Astrocyte of the cerebellum (primary cell): ENCODE measurements at regions of chr15 and their contacts with region 1.

Region 1: GRCh38 chr15:27292641-27293040 is 321.7 kb downstream of the GABRG3 start:
- DNase-seq: no peak
- H3K4me3 ChIP-seq: no peak overlapping the region
- CTCF ChIP-seq: no peak

Region 2: DNA sequence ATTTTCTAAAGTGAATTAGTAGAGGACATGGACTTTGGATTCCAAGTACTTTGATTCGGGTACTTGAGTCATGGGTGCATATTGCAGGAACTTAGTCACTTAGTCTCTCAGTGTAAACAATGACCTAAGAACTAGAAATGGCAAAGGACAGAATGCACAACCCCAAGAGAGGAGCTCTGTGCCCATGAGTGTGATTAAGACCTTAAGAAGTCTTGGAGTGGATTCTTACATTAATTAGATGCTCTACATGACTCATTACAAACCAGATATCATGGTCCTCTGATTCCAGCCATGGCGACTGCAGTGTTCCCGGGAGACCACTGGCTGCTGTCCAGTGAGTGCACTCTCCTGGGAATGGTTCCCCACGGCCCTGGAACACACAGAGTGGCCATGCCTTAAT is 70.2 kb before region 1 on chr15:
- in situ Hi-C with region 1: loop called (anchors 5 kb)
- DNase-seq: no peak
- H3K4me3 ChIP-seq: no peak overlapping the region
- CTCF ChIP-seq: no peak